Mucosa of descending colon (tissue), 3 donors: ENCODE measurements at regions of chr15 and their contacts with region 1.

Region 1: DNA sequence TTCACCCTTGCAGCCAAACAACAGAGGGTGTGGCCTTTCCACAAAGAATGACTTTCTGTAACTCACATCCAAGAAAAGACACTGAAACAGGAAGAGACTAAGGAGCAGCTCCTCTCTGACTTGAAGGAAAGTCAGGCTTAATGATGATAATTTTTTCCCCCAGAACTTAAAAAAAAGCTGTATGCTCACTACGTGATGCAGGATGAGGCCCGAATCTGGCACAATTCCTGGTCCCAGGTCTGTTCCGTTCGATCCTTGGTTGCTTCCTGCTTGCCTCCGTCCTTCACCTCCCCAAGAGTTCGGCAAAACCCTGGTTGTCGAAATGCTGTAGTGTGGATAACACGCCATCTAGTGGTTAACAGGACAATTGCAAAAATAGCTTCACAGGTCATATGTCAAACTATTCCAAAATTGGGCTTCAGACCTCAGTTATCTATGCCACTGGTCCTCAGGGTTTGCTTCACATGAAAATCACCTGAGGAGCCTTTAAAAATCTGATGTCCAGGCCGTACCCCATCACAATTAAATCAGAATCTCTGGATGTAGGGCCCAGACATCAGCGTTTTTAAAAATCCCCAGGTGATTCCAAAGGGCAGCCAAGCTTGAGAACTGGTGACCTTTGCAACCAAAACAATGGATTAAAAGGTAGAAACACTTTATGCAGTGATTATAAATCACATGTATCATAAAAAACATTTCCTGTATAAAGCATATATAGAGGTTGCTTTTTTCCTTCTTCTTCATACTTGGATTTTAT is 28.1 kb upstream of the SYNM start:
- DNase-seq: peak in 2 of 3 donors; percentile 33 to 62
- ATAC-seq: peak; percentile 92
- H3K4me3 ChIP-seq: no peak overlapping the region
- H3K4me1 ChIP-seq: no peaks in the 10 kb centered on the region
- CTCF ChIP-seq: peak; percentile 50

Region 2: GRCh38 chr15:98442379-98442833 is 634.3 kb before region 1 on chr15:
- intact Hi-C with region 1: loop called in 1 of 2 experiments (anchors 5 kb)
- DNase-seq: peak in 1 of 3 donors; percentile 67
- ATAC-seq: peak; percentile 72
- H3K4me3 ChIP-seq: no peak overlapping the region
- H3K4me1 ChIP-seq: no peaks in the 10 kb centered on the region
- CTCF ChIP-seq: peak; percentile 58

Region 3: GRCh38 chr15:98518823-98519561 is 557.7 kb before region 1 on chr15:
- intact Hi-C with region 1: loop called (anchors 10 kb)
- DNase-seq: peak in 2 of 3 donors; percentile 32 to 68
- ATAC-seq: peak; percentile 82
- H3K4me3 ChIP-seq: no peak overlapping the region
- H3K4me1 ChIP-seq: no peaks in the 10 kb centered on the region
- CTCF ChIP-seq: peak; percentile 28

Region 4: GRCh38 chr15:98525661-98526001 is 551.1 kb before region 1 on chr15:
- intact Hi-C with region 1: loop called in 1 of 2 experiments (anchors 10 kb)
- DNase-seq: no peak
- ATAC-seq: no peak
- H3K4me3 ChIP-seq: no peak overlapping the region
- H3K4me1 ChIP-seq: no peaks in the 10 kb centered on the region
- CTCF ChIP-seq: no peak